Heart right ventricle (tissue), 16 donors: ENCODE measurements at regions of chr9 and their contacts with region 1.

Region 1: GRCh38 chr9:128552153-128552743 is at the start of gene SPTAN1:
- DNase-seq: peak; percentile 92 to 94
- ATAC-seq: peak; percentile 85 to 94 (median 91)
- H3K4me3 ChIP-seq: peak within 1 kb of the TSS; percentile 88 to 100 (median 97)
- H3K27ac ChIP-seq: peak within 1 kb of the TSS; percentile 94 to 100 (median 99)
- H3K4me1 ChIP-seq: peaks cover 11 to 72% (median 60%) of the 10 kb centered on the region in 9 donors
- H3K27me3 ChIP-seq: no peaks in the 10 kb centered on the region
- CTCF ChIP-seq: peak in 3 of 9 donors; percentile 7 to 10 (median 8)
- total RNA-seq, gene SPTAN1: 250 to 449 (median 379) TPM

Region 2: GRCh38 chr9:128361986-128362646 is 190.1 kb before region 1 on chr9:
- intact Hi-C with region 1: loop called in 1 of 10 experiments (anchors 10 kb)
- DNase-seq: peak; percentile 78 to 85
- ATAC-seq: peak; percentile 87 to 93 (median 92)
- H3K4me3 ChIP-seq: peak overlapping the region in 9 of 10 donors; percentile 20 to 60 (median 54)
- H3K27ac ChIP-seq: peak overlapping the region in 9 of 10 donors; percentile 10 to 82 (median 61)
- H3K4me1 ChIP-seq: peaks cover 2 to 34% (median 26%) of the 10 kb centered on the region in 9 donors
- H3K27me3 ChIP-seq: no peaks in the 10 kb centered on the region
- CTCF ChIP-seq: peak; percentile 82 to 98 (median 91)

Region 3: GRCh38 chr9:128396970-128397613 is 155.2 kb before region 1 on chr9:
- intact Hi-C with region 1: no loop called
- DNase-seq: peak in 1 of 2 donors; percentile 35
- ATAC-seq: peak; percentile 36 to 95 (median 76)
- H3K4me3 ChIP-seq: peak overlapping the region in 6 of 10 donors; percentile 3 to 29 (median 15)
- H3K27ac ChIP-seq: peak overlapping the region in 9 of 10 donors; percentile 24 to 76 (median 49)
- H3K4me1 ChIP-seq: peaks cover 0 to 17% (median 12%) of the 10 kb centered on the region in 9 donors
- H3K27me3 ChIP-seq: peaks cover 0 to 52% (median 6%) of the 10 kb centered on the region in 7 donors
- CTCF ChIP-seq: no peak

Region 4: GRCh38 chr9:128455849-128456612 is 96.2 kb before region 1 on chr9 and contains the start of gene ODF2:
- intact Hi-C with region 1: loop called in 3 of 10 experiments (anchors 5 to 10 kb)
- DNase-seq: peak; percentile 98 to 99
- ATAC-seq: peak; percentile 93 to 98 (median 96)
- H3K4me3 ChIP-seq: peak within 1 kb of the TSS; percentile 54 to 98 (median 87)
- H3K27ac ChIP-seq: peak within 1 kb of the TSS; percentile 70 to 94 (median 90)
- H3K4me1 ChIP-seq: peaks cover 0 to 33% (median 15%) of the 10 kb centered on the region in 9 donors
- H3K27me3 ChIP-seq: no peaks in the 10 kb centered on the region
- CTCF ChIP-seq: no peak
- total RNA-seq, gene ODF2: 10.9 to 17.1 (median 14.8) TPM

Region 5: GRCh38 chr9:128504485-128505413 is 47.5 kb before region 1 on chr9 and contains the start of gene GLE1:
- intact Hi-C with region 1: loop called in 3 of 10 experiments (anchors 2 to 5 kb)
- DNase-seq: peak; percentile 94 to 98
- ATAC-seq: peak; percentile 99 to 100 (median 100)
- H3K4me3 ChIP-seq: peak within 1 kb of the TSS; percentile 49 to 99 (median 86)
- H3K27ac ChIP-seq: peak within 1 kb of the TSS in 9 of 10 donors; percentile 77 to 94 (median 84)
- H3K4me1 ChIP-seq: peaks cover 4 to 28% (median 24%) of the 10 kb centered on the region in 9 donors
- H3K27me3 ChIP-seq: no peaks in the 10 kb centered on the region
- CTCF ChIP-seq: no peak
- total RNA-seq, gene GLE1: 15.0 to 24.5 (median 19.9) TPM